GM12878 (cell line): ENCODE measurements at regions of chr3 and their contacts with region 1.

Region 1: GRCh38 chr3:187025656-187026316 is 95.5 kb downstream of the ST6GAL1 start:
- DNase-seq: peak; percentile 71
- ATAC-seq: peak; percentile 52
- H3K4me3 ChIP-seq: peak overlapping the region; percentile 76
- H3K27ac ChIP-seq: peak overlapping the region; percentile 92
- H3K4me1 ChIP-seq: peaks cover 29% of the 10 kb centered on the region
- H3K27me3 ChIP-seq: no peaks in the 10 kb centered on the region
- CTCF ChIP-seq: no peak
- EP300 ChIP-seq: no peak
- POLR2A ChIP-seq: peak; percentile 60
- RAD21 ChIP-seq: no peak

Region 2: DNA sequence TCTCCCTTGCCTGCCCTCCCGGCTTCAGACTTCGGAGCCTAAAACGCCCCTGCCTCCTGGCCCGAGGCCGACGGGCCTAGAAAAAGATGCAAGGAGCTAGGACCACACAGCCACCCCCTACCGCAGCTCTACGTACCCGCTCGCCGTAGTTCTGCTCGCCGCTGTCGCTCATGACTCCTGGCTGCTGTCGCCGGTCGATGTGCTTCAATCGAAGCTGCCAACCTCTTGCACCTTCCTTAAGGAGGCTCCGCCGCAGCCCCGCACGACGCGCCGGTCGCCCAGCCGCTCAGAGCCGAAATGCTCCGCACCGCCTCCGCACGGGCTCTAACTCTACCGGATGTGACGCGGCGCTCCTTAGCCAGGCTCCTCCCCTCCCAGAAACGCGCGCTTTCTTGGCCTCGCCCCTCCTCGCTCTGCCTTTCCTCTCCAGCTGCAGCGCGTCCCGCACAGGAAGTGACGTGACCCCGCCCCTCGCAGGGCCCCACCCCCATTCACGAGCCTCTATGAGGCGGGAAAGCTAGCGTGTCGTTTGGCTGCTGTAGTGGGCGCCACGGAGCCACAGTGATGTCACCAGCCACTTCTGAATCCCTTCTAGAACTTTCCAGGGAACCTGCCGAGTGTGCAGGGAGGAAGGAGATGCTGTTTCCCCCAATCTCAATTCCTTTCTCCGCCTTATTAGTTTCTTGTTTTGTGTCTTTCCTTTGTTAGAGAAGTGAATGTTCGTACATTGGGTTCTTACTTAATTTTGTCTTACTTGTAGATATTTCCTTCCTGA is 1087.9 kb before region 1 on chr3 and contains the start of gene TRA2B:
- CTCF ChIA-PET with region 1: no interaction called
- POLR2A ChIA-PET with region 1: no interaction called
- RAD21 ChIA-PET with region 1: no interaction called
- SMC1A ChIA-PET with region 1: no interaction called
- in situ Hi-C with region 1: no loop called
- intact Hi-C with region 1: loop called (anchors 10 kb)
- DNase-seq: peak; percentile 90
- ATAC-seq: peak; percentile 87
- H3K4me3 ChIP-seq: peak within 1 kb of the TSS; percentile 95
- H3K27ac ChIP-seq: peak within 1 kb of the TSS; percentile 100
- H3K4me1 ChIP-seq: no peaks in the 10 kb centered on the region
- H3K27me3 ChIP-seq: no peaks in the 10 kb centered on the region
- CTCF ChIP-seq: peak; percentile 30 to 31 (median 31); a peak in 4 of 6 replicates
- EP300 ChIP-seq: no peak; a peak in 2 of 4 replicates
- POLR2A ChIP-seq: peak; percentile 100
- RAD21 ChIP-seq: no peak
- polyA plus RNA-seq, gene TRA2B: 130 to 153 TPM

Region 3: DNA sequence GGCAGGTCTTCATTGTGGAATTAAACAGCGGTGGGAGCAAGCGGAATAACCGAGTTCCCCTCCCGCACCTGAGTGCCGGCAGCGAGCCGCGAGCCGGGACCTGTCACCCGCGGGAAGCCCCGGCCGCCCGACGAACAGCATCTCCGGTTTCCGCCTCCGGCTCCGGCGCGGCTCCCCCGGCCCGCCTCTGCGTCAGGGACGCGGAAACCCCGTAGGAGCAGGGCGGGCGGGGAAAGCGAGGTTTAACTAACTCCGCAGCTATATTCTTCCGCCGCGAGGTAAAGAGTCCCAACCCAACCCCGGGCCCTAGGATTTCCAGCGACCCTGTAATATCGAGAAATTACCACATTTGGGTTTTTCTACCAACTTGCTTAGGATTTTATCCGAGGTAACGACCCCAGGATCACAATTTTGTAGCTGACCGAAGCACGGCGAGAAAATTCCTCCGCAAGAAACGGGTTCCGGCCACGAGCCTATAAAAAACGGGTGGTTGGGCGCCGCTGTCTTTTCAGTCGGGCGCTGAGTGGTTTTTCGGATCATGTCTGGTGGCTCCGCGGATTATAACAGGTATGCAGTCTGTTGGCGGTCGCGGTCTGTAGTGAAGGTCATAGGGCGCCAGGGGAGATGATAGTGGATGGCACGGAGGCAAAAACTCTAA is 242.6 kb before region 1 on chr3 and contains the start of gene EIF4A2:
- CTCF ChIA-PET with region 1: no interaction called
- POLR2A ChIA-PET with region 1: interaction called, 4 read pairs
- RAD21 ChIA-PET with region 1: no interaction called
- SMC1A ChIA-PET with region 1: interaction called, 3 read pairs
- in situ Hi-C with region 1: no loop called
- intact Hi-C with region 1: loop called (anchors 10 kb)
- DNase-seq: no peak
- ATAC-seq: peak; percentile 78
- H3K4me3 ChIP-seq: peak within 1 kb of the TSS; percentile 78
- H3K27ac ChIP-seq: peak within 1 kb of the TSS; percentile 100
- H3K4me1 ChIP-seq: no peaks in the 10 kb centered on the region
- H3K27me3 ChIP-seq: no peaks in the 10 kb centered on the region
- CTCF ChIP-seq: no peak
- EP300 ChIP-seq: 0 out of 4 replicates have a peak, but pooled peaks of 1 of the 2 experiments have one; percentile 11
- POLR2A ChIP-seq: peak; percentile 92
- RAD21 ChIP-seq: no peak
- polyA plus RNA-seq, gene EIF4A2: 216 to 263 TPM

Region 4: DNA sequence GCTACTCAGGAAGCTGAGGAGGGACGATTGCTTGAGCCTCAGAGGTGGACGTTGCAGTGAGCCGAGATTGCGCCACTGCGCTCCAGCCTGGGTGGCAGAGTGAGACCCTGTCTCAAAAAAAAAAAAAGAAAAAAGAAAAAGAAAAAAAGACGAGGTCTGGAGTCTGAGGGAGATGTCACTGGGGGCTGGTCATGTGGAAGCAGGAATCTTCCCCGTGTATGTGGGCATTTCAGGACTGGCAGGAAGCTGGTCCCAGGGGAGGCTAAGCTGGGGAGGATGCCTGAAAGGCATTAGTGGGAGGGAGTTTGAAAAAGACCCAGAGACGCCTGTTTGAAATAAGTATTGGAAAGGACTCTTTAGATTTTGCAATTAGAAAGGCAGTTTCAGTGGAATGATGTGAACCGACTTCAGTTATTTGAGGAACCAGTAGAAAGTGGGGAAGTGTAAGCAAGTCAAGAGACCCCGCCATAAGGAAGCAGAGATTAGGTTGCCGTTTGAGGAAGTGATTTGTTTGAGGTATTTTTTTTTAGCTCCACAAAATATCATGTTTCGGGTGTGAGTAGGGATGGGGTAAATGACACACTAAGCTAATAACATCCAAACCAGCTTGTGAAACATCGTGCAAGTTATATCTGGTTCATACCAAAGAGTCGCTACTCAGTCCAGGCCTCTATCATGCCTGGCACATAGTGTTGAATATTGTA is 40.0 kb before region 1 on chr3:
- CTCF ChIA-PET with region 1: interaction called, 10 read pairs
- POLR2A ChIA-PET with region 1: interaction called, 13 read pairs
- RAD21 ChIA-PET with region 1: interaction called, 39 read pairs
- SMC1A ChIA-PET with region 1: interaction called, 29 read pairs
- in situ Hi-C with region 1: no loop called
- intact Hi-C with region 1: loop called (anchors 5 kb)
- DNase-seq: peak; percentile 56
- ATAC-seq: peak; percentile 38
- H3K4me3 ChIP-seq: no peak overlapping the region; the same call in 1 of the 2 replicates
- H3K27ac ChIP-seq: peak overlapping the region; percentile 82
- H3K4me1 ChIP-seq: peaks cover 43% of the 10 kb centered on the region
- H3K27me3 ChIP-seq: no peaks in the 10 kb centered on the region
- CTCF ChIP-seq: no peak
- EP300 ChIP-seq: no peak
- POLR2A ChIP-seq: no peak
- RAD21 ChIP-seq: no peak

Region 5: DNA sequence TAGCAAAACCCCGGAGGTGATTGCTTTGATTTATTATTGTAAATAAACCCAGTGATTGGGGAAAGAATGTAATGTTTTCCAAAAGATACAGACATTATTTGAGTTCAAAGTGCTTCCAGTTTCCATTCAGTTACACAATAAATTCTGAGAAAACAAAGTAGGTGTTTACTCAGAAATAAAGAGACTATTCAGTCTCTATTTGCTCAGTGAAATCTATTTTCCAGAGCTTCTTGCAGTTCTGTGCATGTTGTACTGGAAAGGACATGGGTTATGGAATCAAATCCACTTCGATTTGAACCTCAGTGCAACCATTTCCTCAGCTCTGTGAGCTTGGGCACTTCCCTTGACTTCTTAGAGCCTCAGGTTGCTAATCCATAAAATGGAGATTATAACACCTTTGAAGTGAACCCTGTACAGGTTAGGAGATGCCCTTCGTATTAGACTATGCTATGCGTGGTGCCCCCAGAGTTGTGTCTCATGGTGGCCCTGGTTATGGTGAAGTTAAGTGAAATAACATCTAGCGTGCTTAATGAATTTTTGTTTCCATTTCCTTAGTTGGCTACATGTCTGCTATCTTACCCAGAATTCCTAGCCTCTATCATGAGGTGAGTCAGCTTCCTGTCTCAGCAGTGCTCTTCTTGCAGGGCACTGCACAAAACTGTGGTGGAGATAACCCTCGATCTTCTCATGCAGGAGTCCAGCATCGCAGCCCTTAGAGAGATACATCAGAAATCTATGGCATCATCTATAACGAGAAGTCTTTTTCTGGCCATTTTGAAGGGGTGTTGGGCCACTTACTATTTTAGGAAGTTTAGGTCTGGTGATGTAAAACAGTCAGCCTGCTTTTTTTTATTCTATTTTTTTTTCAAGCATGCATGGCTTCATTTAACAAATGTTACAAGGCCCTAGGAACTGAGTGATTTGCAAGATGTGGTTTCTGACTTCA is 15.8 kb after region 1 on chr3:
- CTCF ChIA-PET with region 1: interaction called, 23 read pairs
- POLR2A ChIA-PET with region 1: interaction called, 120 read pairs
- RAD21 ChIA-PET with region 1: interaction called, 46 read pairs
- SMC1A ChIA-PET with region 1: interaction called, 213 read pairs
- in situ Hi-C with region 1: no loop called
- intact Hi-C with region 1: loop called (anchors 2 kb)
- DNase-seq: no peak
- ATAC-seq: peak; percentile 51
- H3K4me3 ChIP-seq: no peak overlapping the region; the same call in 1 of the 2 replicates
- H3K27ac ChIP-seq: peak overlapping the region; percentile 90
- H3K4me1 ChIP-seq: peaks cover 59% of the 10 kb centered on the region
- H3K27me3 ChIP-seq: no peaks in the 10 kb centered on the region
- CTCF ChIP-seq: no peak
- EP300 ChIP-seq: no peak
- POLR2A ChIP-seq: no peak
- RAD21 ChIP-seq: peak; percentile 1; the same call in 1 of the 2 replicates

Region 6: DNA sequence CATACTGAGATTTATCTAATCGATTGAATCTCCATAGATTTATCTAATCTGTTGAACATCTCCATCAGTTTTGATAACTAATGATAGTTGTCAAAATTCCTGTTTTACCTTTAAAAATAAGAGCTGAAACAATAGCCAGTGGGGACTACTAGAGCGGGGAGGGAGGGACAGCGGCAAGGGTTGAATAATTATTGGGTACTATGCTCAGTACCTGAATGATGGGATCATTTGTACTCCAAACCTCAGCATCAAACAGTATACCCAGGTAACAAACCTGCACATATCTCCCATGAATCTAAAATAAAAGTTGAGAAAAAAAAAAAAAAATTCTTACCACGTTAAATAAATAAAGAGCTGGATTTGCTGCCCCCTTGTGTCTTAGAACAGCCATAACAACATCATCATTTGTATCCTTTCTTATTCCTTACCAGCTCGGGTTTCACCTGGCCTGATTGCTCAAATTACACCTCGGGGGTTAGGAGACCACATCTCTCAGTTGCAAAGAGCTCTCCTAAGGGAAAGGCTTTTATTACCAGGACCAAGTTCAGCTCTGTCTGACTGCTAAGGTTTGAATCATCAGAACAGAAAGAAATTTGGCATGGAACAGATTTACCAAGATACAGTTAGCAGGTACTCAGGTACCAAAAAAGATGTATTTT is 139.2 kb after region 1 on chr3:
- CTCF ChIA-PET with region 1: interaction called, 11 read pairs
- POLR2A ChIA-PET with region 1: no interaction called
- RAD21 ChIA-PET with region 1: interaction called, 7 read pairs
- SMC1A ChIA-PET with region 1: interaction called, 8 read pairs
- in situ Hi-C with region 1: no loop called
- intact Hi-C with region 1: no loop called
- DNase-seq: no peak
- ATAC-seq: peak; percentile 76
- H3K4me3 ChIP-seq: no peak overlapping the region
- H3K27ac ChIP-seq: no peak overlapping the region
- H3K4me1 ChIP-seq: no peaks in the 10 kb centered on the region
- H3K27me3 ChIP-seq: no peaks in the 10 kb centered on the region; a peak in 1 of 4 replicates
- CTCF ChIP-seq: peak; percentile 52 to 60 (median 57); a peak in 5 of 6 replicates
- EP300 ChIP-seq: no peak
- POLR2A ChIP-seq: no peak
- RAD21 ChIP-seq: peak; percentile 74